ENCODE measurements at regions of chr7 and their contacts with region 1.

Region 1: DNA sequence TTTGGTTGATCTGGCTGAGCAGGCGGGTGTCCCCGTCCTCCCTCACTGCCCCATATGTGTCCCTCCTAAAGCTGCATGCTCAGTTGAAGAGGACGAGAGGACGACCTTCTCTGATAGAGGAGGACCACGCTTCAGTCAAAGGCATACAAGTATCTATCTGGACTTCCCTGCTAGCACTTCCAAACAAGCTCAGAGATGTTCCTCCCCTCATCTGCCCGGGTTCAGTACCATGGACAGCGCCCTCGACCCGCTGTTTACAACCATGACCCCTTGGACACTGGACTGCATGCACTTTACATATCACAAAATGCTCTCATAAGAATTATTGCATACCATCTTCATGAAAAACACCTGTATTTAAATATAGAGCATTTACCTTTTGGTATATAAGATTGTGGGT is 26.9 kb upstream of the TRIM56 start:
- DNase-seq: peak in 1 of 2 donors; percentile 67
- ATAC-seq: peak; percentile 45

Region 2: GRCh38 chr7:100803398-100804233 is 254.7 kb before region 1 on chr7:
- intact Hi-C with region 1: no loop called
- DNase-seq: peak; percentile 86 to 91
- ATAC-seq: peak; percentile 81

Region 3: DNA sequence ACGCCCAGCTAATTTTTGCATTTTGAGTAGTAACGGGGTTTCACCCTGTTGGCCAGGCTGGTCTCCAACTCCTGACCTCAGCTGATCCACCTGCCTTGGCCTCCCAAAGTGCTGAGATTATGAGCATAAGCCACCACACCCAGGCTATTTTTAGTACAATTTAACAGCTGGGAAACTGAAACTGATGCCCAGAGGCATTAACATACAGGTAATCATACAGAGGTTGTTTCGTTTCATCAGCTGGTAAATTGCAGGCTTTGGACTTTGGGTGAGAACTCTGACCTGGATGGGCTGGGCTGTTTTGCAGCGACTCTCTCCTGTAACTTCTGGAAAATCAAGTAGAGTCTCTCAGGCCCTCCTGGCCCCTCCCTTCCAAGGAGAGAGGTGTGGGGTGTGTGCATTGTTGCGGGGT is 156.4 kb before region 1 on chr7:
- intact Hi-C with region 1: loop called (anchors 5 to 10 kb)
- DNase-seq: peak; percentile 57 to 71
- ATAC-seq: peak; percentile 81

Region 4: DNA sequence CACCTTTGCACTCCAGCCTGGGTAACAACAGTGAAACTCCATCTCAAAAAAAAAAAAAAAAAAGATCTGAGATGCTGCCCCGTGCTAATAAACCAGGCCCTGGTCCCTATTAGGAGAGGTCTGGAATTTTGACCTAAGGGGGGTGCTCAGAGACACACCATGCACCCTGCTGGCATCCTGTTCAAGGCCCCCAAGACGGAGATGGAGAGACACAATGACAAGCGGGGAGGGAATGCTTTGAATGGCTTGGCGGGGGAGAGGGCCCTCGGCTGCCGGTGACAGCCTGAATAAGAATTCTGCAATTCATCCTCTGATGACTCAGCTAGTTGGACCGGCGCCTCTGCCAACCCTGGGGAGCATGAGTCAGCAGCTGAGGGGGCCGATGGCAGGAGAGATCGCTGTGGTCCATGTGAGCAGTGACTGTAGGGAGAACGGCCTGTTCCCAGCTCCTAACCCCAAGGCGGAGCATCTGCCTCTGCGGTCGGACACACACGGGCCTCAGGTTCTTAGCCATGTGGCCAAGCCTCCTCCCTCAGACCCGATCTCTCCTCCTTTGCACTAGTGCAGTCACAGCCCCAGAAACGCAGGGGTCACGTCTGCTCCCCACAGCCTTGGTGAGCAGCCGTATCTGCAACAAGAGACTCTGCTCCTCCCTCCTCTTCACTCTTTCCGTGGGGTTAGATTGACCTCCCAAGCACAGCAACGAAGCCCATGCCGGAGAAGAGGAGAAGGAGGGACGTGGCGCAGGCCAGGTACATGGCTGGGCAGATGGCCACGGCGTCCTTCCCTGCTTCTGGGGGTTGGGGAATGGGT is 41.8 kb after region 1 on chr7:
- intact Hi-C with region 1: no loop called
- DNase-seq: peak; percentile 68 to 87
- ATAC-seq: peak; percentile 45